ENCODE measurements at regions of chr11 and their contacts with region 1.

Region 1: GRCh38 chr11:109993786-109994185 is 99.4 kb upstream of the ZC3H12C start:
- DNase-seq: no peak
- H3K27ac ChIP-seq: no peak overlapping the region
- CTCF ChIP-seq: no peak

Region 2: GRCh38 chr11:109828387-109828786 is 165.4 kb before region 1 on chr11:
- CTCF ChIA-PET with region 1: no interaction called
- POLR2A ChIA-PET with region 1: no interaction called
- DNase-seq: no peak
- H3K27ac ChIP-seq: no peak overlapping the region
- CTCF ChIP-seq: no peak

Region 3: GRCh38 chr11:110128161-110128560 is 134.4 kb after region 1 on chr11:
- CTCF ChIA-PET with region 1: interaction called, 10 read pairs
- POLR2A ChIA-PET with region 1: no interaction called
- DNase-seq: no peak
- H3K27ac ChIP-seq: no peak overlapping the region
- CTCF ChIP-seq: no peak